ENCODE measurements at regions of chr1 and their contacts with region 1.

Region 1: DNA sequence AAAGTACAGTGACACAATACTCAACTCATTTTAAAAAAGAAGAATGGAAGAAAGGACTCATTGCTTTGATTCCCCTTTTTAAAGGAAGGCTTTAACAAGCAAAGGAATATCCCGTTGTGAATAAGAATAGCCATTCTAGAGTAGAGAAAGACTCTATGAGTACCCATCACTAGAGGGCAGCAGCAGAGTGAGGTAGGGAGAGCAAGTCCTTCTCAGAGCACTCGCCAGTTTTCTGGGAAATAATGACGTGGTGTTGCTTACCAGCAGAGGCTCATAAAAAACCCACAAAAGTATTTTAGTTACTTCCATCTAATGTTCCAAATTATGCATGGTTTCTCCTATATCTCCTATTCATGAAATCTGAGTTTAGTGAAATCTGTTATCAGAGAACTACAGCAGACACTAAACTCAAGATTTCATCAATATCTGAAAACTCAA is 74.6 kb downstream of the USP24 start:
- ATAC-seq: peak; percentile 78 to 100 (median 90)
- H3K4me3 ChIP-seq: no peak overlapping the region
- H3K27ac ChIP-seq: no peak overlapping the region
- H3K4me1 ChIP-seq: no peaks in the 10 kb centered on the region

Region 2: DNA sequence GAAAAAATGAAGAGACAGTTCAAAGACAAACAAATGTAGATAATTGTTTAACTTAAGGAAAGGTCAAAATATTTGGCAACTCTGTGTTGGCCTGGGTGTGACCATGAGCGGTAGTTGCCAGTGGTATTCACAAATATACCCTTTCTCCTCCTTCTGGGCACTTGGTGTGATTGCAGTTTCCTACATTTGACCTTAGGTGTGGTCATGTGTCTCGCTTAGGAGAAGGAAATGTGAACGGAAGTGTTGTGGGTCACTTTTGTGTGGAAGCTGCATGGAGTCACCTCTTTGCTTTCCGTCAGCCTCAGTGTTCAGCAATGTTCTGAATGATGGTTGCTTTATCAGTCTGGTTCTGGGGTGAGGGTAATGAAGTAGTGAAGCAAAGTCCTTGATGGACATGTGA is 104.7 kb before region 1 on chr1:
- in situ Hi-C with region 1: no loop called
- ATAC-seq: no peak
- H3K4me3 ChIP-seq: no peak overlapping the region
- H3K27ac ChIP-seq: no peak overlapping the region
- H3K4me1 ChIP-seq: peaks cover 3% of the 10 kb centered on the region in 2 donors

Region 3: GRCh38 chr1:55089683-55090082 is 50.9 kb before region 1 on chr1:
- in situ Hi-C with region 1: loop called in 1 of 9 experiments (anchors 10 kb)
- ATAC-seq: no peak
- H3K4me3 ChIP-seq: no peak overlapping the region
- H3K27ac ChIP-seq: no peak overlapping the region
- H3K4me1 ChIP-seq: no peaks in the 10 kb centered on the region

Region 4: DNA sequence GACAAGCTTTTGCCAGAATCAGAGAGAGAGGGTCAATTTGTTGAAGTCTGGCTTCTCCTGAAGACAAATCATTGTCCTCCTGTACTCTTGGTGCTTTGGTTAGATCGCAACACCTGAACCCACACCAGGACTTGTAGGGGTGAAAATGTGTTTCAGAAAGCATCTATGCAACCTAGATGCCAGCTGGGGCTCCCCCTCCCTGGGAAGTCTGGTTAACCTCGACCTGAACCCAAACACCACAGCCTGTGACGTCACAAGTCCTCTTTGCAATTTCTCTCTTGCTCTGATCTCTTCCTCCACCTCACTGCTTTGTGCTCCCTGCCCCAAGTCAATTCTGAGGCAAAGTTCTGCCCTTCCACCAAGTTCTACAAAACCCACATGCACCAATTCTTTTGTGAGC is 117.4 kb after region 1 on chr1:
- in situ Hi-C with region 1: loop called in 1 of 9 experiments (anchors 25 kb)
- ATAC-seq: no peak
- H3K4me3 ChIP-seq: no peak overlapping the region
- H3K27ac ChIP-seq: no peak overlapping the region
- H3K4me1 ChIP-seq: peaks cover 0 to 2% of the 10 kb centered on the region in 2 donors

Region 5: GRCh38 chr1:55522353-55522903 is 381.9 kb after region 1 on chr1:
- in situ Hi-C with region 1: no loop called
- ATAC-seq: no peak
- H3K4me3 ChIP-seq: no peak overlapping the region
- H3K27ac ChIP-seq: no peak overlapping the region
- H3K4me1 ChIP-seq: no peaks in the 10 kb centered on the region

Region 6: DNA sequence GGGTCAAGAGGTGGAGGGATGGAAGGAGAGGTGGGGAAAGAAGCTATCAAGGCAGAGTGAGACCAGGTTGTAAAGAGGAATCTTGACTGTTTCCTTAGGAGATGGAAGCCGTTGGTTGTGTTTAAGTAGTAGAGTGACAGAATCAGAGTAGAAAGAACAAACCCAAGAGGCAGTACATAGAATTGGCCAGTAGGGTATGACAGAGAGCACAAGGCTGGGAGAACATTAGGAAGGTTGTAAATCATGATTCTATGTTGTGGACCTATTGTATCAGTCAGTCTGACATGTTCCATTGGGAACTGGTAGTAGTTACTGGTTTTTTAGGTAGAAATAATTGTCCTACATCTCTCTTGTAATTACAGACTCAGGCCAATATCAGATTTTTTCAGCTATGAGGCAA is 561.5 kb after region 1 on chr1:
- in situ Hi-C with region 1: no loop called
- ATAC-seq: peak in 3 of 8 experiments; percentile 32 to 62 (median 48)
- H3K4me3 ChIP-seq: no peak overlapping the region
- H3K27ac ChIP-seq: no peak overlapping the region
- H3K4me1 ChIP-seq: no peaks in the 10 kb centered on the region

Measured in motor neuron (in vitro differentiated cells).